CD8-positive, alpha-beta T cell (primary cell): ENCODE measurements at regions of chr11 and their contacts with region 1.

Region 1: GRCh38 chr11:34916015-34916842 is at the starts of genes APIP and PDHX:
- DNase-seq: peak; percentile 86 to 96 (median 94)
- ATAC-seq: peak; percentile 89
- H3K4me3 ChIP-seq: peak within 1 kb of the TSS; percentile 70 to 94
- H3K4me3 Mint-ChIP-seq: peak within 1 kb of the TSS; percentile 96
- H3K27ac ChIP-seq: peak within 1 kb of the TSS; percentile 57 to 72
- H3K27ac Mint-ChIP-seq: peak within 1 kb of the TSS; percentile 97
- H3K4me1 ChIP-seq: peaks cover 18% of the 10 kb centered on the region
- H3K4me1 Mint-ChIP-seq: peaks cover 53% of the 10 kb centered on the region
- H3K27me3 ChIP-seq: no peaks in the 10 kb centered on the region
- H3K27me3 Mint-ChIP-seq: no peaks in the 10 kb centered on the region
- CTCF ChIP-seq: no peak
- total RNA-seq, gene APIP: 5.4 to 6.4 TPM
- total RNA-seq, gene PDHX: 20.3 to 21.4 TPM

Region 2: DNA sequence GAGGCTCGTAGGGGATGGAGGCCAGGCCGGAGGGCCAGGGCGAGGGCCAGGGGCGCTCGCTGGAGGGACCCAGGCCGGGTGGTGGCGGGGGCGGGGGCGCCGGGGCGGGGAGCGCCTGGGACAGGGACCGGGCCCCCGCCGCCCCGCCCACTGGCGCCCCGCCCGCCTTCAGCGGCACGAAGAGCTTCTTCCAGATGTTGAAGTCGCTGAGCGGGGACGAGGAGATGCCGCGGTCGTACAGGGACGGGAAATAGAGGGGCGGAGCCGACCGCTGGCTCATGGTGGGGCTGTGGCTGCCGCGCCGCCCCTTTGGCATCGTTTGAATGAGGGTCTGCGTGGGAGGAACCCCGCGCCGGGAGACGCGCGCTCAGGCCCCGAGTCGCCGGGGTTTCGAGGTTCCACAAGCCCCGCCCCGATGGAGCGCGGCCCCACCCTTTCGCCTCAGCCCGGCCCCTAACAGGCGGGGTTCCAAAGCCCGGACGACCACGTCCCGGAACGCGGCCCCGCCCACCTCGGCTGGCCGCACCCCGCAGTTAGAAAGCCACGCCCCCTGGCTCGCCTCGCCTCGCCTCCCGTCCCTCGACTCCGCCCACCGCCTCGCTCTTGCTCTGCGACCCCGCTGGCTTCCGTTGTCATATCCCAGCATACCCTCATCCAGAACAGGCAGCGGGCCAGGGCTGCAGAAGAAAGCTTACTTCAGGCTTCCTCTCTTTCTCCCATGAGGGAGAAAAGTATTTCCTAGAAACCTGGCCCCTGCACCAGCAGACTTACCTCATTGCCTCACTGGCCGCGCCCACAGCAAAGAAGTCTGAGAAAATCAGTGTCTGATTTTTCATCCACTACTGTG is 1215.6 kb before region 1 on chr11 and contains the start of gene C11orf91:
- CTCF ChIA-PET with region 1: no interaction called
- POLR2A ChIA-PET with region 1: no interaction called
- intact Hi-C with region 1: loop called in 1 of 2 experiments (anchors 2 kb)
- DNase-seq: peak; percentile 88 to 96 (median 94)
- ATAC-seq: peak; percentile 95
- H3K4me3 ChIP-seq: peak within 1 kb of the TSS; percentile 51 to 68
- H3K4me3 Mint-ChIP-seq: peak within 1 kb of the TSS; percentile 92
- H3K27ac ChIP-seq: no peak within 1 kb of the TSS
- H3K27ac Mint-ChIP-seq: peak within 1 kb of the TSS; percentile 64
- H3K4me1 ChIP-seq: peaks cover 13% of the 10 kb centered on the region
- H3K4me1 Mint-ChIP-seq: peaks cover 25% of the 10 kb centered on the region
- H3K27me3 ChIP-seq: no peaks in the 10 kb centered on the region
- H3K27me3 Mint-ChIP-seq: peaks cover 2% of the 10 kb centered on the region
- CTCF ChIP-seq: no peak
- total RNA-seq, gene C11orf91: 0.54 TPM in 1 of 2 experiments, not detected in the other

Region 3: GRCh38 chr11:34427186-34427805 is 488.9 kb before region 1 on chr11:
- CTCF ChIA-PET with region 1: no interaction called
- POLR2A ChIA-PET with region 1: no interaction called
- intact Hi-C with region 1: no loop called
- DNase-seq: no peak
- ATAC-seq: no peak
- H3K4me3 ChIP-seq: no peak overlapping the region
- H3K4me3 Mint-ChIP-seq: no peak overlapping the region
- H3K27ac ChIP-seq: no peak overlapping the region
- H3K27ac Mint-ChIP-seq: no peak overlapping the region
- H3K4me1 ChIP-seq: no peaks in the 10 kb centered on the region
- H3K4me1 Mint-ChIP-seq: peaks cover 2% of the 10 kb centered on the region
- H3K27me3 ChIP-seq: peaks cover 0 to 2% of the 10 kb centered on the region in 2 experiments
- H3K27me3 Mint-ChIP-seq: peaks cover 5% of the 10 kb centered on the region
- CTCF ChIP-seq: no peak

Region 4: DNA sequence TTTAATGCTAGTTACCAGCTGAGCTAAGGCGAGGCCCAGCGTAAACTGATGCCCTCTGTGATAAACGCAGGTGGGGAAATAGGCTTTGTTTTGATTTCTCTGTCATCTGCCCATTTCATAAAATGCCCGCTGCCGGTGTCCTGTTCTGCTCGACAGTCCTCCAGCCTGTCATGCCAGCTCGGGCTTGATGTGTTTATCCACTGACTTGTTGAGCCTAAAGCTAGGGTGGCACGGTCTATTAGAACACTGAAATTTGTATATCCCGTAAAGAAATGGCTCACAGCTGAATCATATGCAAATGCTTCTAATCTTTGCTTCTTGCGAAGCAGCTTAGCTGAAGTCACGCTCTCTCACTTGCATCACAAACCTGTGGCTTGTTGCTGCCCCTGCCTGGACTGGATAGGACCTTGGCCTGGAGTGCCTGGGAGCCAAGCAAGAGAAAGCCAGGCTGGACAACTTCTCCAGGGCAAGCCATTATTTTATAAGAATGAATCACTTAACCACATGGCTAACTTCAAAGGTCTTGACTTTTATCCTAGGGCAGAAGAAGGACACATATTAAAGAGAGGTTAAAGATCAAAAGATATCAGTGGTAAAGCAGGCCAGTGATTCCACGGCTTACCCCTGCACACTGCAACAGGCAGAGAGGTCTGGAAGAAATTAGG is 262.3 kb before region 1 on chr11:
- CTCF ChIA-PET with region 1: no interaction called
- POLR2A ChIA-PET with region 1: no interaction called
- intact Hi-C with region 1: loop called in 1 of 2 experiments (anchors 10 kb)
- DNase-seq: peak in 1 of 9 experiments; percentile 19
- ATAC-seq: no peak
- H3K4me3 ChIP-seq: no peak overlapping the region
- H3K4me3 Mint-ChIP-seq: no peak overlapping the region
- H3K27ac ChIP-seq: no peak overlapping the region
- H3K27ac Mint-ChIP-seq: no peak overlapping the region
- H3K4me1 ChIP-seq: peaks cover 43% of the 10 kb centered on the region
- H3K4me1 Mint-ChIP-seq: peaks cover 38% of the 10 kb centered on the region
- H3K27me3 ChIP-seq: peaks cover 0 to 3% of the 10 kb centered on the region in 2 experiments
- H3K27me3 Mint-ChIP-seq: peaks cover 32% of the 10 kb centered on the region
- CTCF ChIP-seq: no peak

Region 5: DNA sequence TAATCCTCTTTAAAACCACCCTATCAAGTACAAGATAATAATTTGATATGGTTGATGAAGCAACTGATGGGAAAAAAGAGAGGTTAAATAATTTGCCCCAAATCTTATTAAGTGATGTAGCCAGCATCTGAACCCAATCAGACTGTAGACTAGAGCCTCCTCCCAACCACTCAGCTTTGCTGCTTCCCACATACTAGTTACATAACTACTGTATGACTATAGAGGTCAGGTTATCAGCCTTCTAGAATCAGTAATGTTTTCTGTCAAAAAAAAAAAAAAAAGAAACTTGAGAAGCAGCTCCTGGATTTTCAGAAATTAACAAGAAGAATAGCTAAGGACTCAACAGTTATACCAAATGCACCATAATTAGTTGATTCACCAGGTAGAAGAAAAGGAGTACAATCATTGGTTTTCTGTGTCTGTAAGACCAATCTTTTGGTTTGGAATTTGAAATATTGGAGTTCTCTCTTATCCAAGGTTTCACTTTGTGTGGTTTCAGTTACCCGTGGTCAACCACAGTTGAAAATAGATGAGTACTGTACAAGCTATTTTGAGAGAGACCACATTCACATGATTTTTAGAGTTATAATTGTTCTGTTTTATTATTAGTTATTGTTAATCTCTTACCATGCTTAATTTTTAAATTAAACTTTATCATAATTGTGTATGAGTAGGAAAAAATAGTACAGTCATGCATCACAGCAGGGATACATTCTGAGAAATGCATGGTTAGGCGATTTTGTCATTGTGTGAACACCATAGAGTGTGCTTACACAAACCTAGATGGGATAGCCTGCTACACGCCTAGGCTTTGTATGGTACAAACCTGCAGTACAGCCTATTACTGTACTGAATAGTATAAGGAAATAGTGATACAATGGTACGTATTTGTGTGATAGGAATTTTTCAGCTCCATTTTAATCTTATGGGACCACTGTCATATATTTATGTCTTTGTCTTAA is 72.3 kb after region 1 on chr11:
- CTCF ChIA-PET with region 1: no interaction called
- POLR2A ChIA-PET with region 1: no interaction called
- intact Hi-C with region 1: no loop called
- DNase-seq: no peak
- ATAC-seq: no peak
- H3K4me3 ChIP-seq: no peak overlapping the region
- H3K4me3 Mint-ChIP-seq: no peak overlapping the region
- H3K27ac ChIP-seq: no peak overlapping the region
- H3K27ac Mint-ChIP-seq: no peak overlapping the region
- H3K4me1 ChIP-seq: no peaks in the 10 kb centered on the region
- H3K4me1 Mint-ChIP-seq: peaks cover 10% of the 10 kb centered on the region
- H3K27me3 ChIP-seq: no peaks in the 10 kb centered on the region
- H3K27me3 Mint-ChIP-seq: no peaks in the 10 kb centered on the region
- CTCF ChIP-seq: no peak

Region 6: DNA sequence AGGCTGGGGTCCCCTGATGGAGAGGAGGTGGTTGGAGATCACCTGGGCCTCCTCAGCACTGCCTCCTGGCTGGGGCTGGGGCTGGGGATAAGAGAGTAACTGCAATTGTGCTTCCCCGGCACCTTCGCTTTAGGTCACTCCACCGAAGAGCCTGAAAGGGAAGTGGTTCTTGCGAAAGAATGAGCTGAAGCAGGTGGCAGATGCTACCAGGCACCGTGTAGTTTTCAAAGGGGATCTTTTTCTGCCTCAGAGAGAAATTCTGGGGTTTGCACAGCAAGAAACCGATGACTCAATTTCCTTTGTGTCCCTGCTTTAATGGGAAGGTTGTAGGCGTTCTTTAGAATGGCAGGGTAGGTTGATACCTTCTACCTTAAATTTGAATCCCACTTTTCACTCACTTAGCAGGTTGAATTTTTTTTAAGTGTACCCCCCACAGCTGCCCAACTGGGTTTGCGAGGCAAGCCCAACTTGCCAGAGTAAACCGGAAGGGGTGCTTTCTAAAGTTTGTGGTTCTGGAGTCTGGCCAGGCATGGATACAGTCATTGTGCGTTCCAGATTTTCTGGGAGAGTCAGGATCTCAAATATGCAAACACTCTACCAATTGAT is 228.0 kb after region 1 on chr11:
- CTCF ChIA-PET with region 1: no interaction called
- POLR2A ChIA-PET with region 1: interaction called, 3 read pairs
- intact Hi-C with region 1: loop called (anchors 5 kb)
- DNase-seq: peak in 8 of 9 experiments; percentile 35 to 89 (median 70)
- ATAC-seq: peak; percentile 51
- H3K4me3 ChIP-seq: peak overlapping the region; percentile 37 to 46
- H3K4me3 Mint-ChIP-seq: peak overlapping the region; percentile 79
- H3K27ac ChIP-seq: peak overlapping the region; percentile 54 to 77
- H3K27ac Mint-ChIP-seq: peak overlapping the region; percentile 98
- H3K4me1 ChIP-seq: peaks cover 70% of the 10 kb centered on the region
- H3K4me1 Mint-ChIP-seq: peaks cover 80% of the 10 kb centered on the region
- H3K27me3 ChIP-seq: no peaks in the 10 kb centered on the region
- H3K27me3 Mint-ChIP-seq: no peaks in the 10 kb centered on the region
- CTCF ChIP-seq: no peak

Region 7: DNA sequence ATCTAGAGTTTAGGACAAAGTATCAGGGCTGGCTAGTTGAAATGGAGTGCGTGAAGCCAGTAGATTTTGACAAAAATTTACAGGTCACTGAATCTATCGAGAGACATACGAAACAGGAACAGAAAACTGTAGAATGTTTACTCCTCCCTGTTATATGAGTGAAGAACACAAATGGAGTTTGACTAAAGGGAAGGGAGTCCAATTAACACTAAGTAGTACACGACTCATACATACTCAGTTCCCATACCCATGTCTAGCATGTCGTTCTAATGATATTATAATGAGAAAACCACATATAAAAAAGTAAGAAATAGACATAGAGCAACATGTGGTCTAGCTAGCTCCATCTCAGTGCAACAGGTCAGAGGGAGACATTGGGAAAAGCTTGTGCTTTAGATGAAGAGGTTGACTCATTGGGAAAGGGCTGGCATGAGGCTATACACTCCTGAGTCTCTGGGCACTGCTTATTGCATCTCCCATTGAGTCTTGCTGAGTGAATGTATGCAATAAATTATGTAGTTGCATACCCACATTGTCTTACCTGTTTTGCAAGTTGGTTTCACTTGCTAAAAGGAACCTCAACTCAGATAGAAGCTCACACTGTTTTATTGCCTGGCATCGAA is 266.2 kb after region 1 on chr11:
- CTCF ChIA-PET with region 1: no interaction called
- POLR2A ChIA-PET with region 1: no interaction called
- intact Hi-C with region 1: no loop called
- DNase-seq: peak in 1 of 9 experiments; percentile 24
- ATAC-seq: no peak
- H3K4me3 ChIP-seq: no peak overlapping the region
- H3K4me3 Mint-ChIP-seq: peak overlapping the region; percentile 24
- H3K27ac ChIP-seq: peak overlapping the region in 1 of 2 experiments; percentile 9
- H3K27ac Mint-ChIP-seq: peak overlapping the region; percentile 89
- H3K4me1 ChIP-seq: peaks cover 80% of the 10 kb centered on the region
- H3K4me1 Mint-ChIP-seq: peaks cover 86% of the 10 kb centered on the region
- H3K27me3 ChIP-seq: no peaks in the 10 kb centered on the region
- H3K27me3 Mint-ChIP-seq: no peaks in the 10 kb centered on the region
- CTCF ChIP-seq: no peak

Region 8: DNA sequence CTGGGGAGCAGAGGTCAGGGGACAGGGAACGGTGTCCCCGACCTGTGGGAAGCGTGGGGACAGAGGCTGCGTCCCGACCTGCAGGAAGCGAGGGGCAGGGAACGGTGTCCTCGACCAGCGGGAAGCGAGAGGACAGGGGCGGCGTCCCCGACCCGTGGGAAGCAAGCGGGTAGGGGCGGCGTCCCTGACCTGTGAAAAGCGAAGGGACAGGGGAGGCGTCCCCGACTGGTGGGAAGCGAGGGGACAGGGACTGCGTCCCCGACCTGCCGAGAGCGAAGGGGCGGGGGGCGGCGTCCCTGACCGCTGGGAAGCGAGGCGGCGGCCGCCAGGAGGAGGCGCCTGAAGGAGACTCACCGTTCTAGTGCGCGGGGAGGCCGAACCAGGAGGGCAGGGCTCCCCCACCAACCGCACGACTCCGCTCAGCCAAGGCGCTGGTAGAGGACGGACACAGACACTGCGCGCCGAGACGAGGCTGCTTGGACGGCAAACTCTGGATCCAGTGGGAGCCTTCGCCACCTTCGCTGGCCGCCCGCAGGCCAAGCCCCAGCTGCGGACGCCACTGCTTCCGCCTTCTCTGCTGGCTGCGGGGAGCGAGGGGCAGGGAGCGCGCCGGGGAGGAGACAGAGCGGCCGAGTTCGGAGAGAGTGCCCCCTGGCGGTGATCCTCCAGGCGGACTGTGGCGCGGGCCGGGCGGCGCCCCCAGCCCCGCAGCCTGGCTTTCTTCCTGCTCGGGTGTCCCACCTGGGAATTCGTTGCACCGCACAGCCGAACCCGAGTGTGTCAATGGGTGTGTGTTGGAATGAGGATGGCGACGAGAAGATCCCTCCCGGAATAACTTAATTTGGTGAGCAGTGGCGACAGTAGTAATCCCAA is 1593.7 kb after region 1 on chr11 and contains the start of gene TRAF6:
- CTCF ChIA-PET with region 1: no interaction called
- POLR2A ChIA-PET with region 1: no interaction called
- intact Hi-C with region 1: loop called in 1 of 2 experiments (anchors 10 kb)
- DNase-seq: peak; percentile 74 to 95 (median 91)
- ATAC-seq: peak; percentile 95
- H3K4me3 ChIP-seq: peak within 1 kb of the TSS; percentile 84 to 97
- H3K4me3 Mint-ChIP-seq: peak within 1 kb of the TSS; percentile 92
- H3K27ac ChIP-seq: peak within 1 kb of the TSS; percentile 74 to 83
- H3K27ac Mint-ChIP-seq: peak within 1 kb of the TSS; percentile 92
- H3K4me1 ChIP-seq: peaks cover 16% of the 10 kb centered on the region
- H3K4me1 Mint-ChIP-seq: peaks cover 37% of the 10 kb centered on the region
- H3K27me3 ChIP-seq: no peaks in the 10 kb centered on the region
- H3K27me3 Mint-ChIP-seq: peaks cover 5% of the 10 kb centered on the region
- CTCF ChIP-seq: peak; percentile 84
- total RNA-seq, gene TRAF6: 29.7 to 31.3 TPM